ENCODE measurements at regions of chr11 and their contacts with region 1.

Region 1: DNA sequence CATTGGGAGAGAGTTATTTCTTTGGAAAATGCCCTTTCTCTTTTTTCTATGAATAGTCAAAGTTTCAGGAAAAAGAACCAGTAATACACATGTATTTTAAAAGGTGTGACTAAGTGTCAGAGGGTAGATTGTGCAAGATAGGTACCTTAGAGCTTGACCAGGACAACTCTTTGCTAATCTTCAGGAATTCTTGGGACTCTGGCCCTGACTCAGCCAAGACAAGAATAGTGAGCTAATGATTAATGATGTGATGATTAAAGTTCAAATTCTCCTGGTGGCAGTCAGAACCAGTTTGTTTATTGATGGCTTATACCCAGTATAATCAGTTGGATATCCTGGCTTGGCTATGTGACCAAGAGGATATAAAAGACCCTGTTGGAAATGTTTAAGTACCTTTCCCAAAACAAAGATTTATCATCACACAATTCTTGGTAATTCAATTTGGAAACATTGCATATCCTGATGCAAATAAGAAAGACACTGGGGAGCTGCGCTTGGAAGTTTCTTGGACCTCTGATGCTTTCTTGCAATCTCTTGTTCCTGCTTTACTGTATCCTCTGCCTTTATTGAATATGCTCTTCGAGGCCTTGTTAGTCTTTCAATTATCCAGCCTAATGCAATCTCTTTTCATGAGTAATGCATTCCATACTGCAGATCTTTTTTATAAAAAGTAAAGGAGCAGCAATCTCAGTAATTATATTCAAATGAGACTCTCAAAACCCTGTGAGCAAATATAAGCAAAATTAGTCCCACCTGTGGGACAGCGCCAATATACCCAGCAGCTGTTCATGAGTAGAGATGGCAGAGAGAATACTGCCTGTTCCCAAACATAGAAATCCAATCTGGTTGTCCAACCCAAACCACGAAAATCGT is 48.0 kb upstream of the CEP126 start:
- DNase-seq: peak; percentile 29
- H3K4me3 ChIP-seq: no peak overlapping the region
- H3K27ac ChIP-seq: no peak overlapping the region
- H3K4me1 ChIP-seq: peaks cover 58% of the 10 kb centered on the region
- H3K27me3 ChIP-seq: no peaks in the 10 kb centered on the region
- CTCF ChIP-seq: no peak
- POLR2A ChIP-seq: no peak

Region 2: DNA sequence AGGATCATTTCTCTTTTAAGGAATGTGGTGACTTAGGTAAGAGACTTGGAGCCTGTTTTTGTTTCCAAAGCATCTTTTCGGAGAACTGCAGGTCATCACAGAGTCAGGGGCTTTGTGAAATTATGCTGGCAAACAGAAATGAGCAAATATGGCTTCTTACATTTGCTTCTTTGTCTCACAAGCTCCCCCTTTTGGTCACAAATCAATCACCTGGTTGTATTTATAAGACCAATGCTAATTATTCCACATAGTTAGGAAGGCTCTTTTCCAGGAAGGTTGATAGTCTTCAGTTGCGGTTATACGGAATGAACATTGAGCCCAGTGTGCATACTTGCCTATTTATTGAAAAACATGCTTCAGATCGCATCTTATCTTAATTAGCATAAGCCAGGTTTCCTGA is 13.4 kb after region 1 on chr11:
- CTCF ChIA-PET with region 1: interaction called, 159 read pairs
- POLR2A ChIA-PET with region 1: no interaction called
- dilution Hi-C with region 1: no loop called
- intact Hi-C with region 1: no loop called
- DNase-seq: peak; percentile 61
- H3K4me3 ChIP-seq: no peak overlapping the region
- H3K27ac ChIP-seq: no peak overlapping the region
- H3K4me1 ChIP-seq: no peaks in the 10 kb centered on the region
- H3K27me3 ChIP-seq: no peaks in the 10 kb centered on the region
- CTCF ChIP-seq: peak; percentile 37 to 53
- POLR2A ChIP-seq: no peak

Measured in endothelial cell of umbilical vein (primary cell).